IMR-90 (cell line): ENCODE measurements at regions of chr1 and their contacts with region 1.

Region 1: DNA sequence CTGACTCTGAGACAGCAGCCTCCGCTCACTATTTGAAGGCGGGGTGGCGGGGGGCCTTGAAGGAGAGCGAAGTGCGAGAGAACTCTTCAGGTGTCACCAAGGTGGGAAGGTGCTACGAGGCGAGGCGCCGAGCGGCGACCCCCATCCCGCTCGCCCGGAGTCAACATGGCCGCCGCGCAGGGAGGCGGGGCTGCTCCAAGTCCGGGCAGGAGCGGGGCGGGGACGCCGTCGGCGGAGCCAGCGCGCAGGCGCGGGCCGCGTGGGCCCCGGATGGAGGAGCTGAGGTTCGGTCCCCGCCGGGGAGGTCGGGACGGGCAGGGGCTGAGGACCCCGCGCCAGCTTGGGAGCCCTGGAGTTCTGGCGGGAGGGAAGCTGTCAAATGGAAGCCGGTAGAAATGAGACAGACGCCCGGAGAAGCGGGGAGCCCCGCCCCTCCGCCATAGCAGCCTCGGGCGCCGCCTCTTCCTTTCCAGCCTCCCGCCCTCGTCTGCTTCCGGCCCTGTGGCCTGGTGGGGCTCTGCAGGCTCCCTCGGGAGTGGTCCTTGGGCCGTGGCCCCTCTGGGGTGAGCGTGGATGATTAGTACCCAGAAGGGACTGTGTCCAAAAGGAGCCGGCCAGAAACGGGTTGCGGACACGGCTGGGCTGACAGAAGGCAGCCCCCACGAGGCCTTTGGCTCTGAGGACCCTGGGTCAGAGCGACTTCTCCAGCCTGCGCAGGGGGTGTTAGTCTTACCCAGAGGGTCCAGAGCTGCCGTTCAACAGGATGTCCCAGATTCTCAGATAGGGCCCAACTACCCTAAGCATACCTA is at the start of gene PIGV:
- DNase-seq: peak; percentile 75
- ATAC-seq: peak; percentile 77
- H3K4me3 ChIP-seq: peak within 1 kb of the TSS; percentile 72
- H3K27ac ChIP-seq: peak within 1 kb of the TSS; percentile 95
- H3K4me1 ChIP-seq: peaks cover 31% of the 10 kb centered on the region
- H3K27me3 ChIP-seq: no peaks in the 10 kb centered on the region
- CTCF ChIP-seq: no peak
- POLR2A ChIP-seq: peak; percentile 66; the same call in 1 of the 2 replicates
- RAD21 ChIP-seq: 0 out of 2 replicates have a peak, but pooled peaks have one; percentile 4
- total RNA-seq, gene PIGV: 8.6 and 10.6 TPM in 2 replicates

Region 2: DNA sequence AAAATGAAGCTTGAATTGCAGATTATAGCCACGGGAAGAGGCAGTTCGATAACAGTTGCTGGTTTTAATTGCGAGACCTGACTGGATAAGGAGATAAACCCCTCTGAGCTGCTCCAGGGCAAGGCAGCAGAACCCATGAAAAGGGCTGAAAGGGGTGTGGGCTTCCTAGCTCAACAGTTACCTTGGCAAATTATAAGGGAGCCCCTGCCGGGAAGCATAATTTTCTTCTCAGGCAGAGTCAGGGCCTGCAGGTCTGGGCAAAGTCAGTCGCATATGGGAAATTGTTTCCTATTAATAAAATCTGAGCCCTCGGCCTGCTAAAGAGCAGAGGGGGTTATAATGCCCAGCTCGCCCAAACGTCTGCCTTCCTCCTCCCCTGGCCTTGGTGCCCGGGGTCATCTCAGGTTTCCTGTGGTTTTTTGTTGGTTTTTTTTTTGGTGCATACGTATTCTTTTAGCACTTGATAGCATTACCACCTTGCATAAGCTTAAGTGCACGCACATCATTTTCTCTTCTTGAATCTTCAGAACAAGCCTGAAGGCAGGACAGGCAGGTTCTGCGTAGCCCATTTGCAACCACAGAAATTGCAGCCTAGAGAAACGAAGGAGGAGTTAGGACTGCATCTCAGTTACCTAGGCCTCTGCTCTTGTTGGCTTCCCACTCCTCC is 1021.9 kb before region 1 on chr1:
- CTCF ChIA-PET with region 1: no interaction called
- POLR2A ChIA-PET with region 1: no interaction called
- dilution Hi-C with region 1: no loop called
- in situ Hi-C with region 1: no loop called
- intact Hi-C with region 1: no loop called
- DNase-seq: no peak
- ATAC-seq: no peak
- H3K4me3 ChIP-seq: no peak overlapping the region
- H3K27ac ChIP-seq: no peak overlapping the region
- H3K4me1 ChIP-seq: no peaks in the 10 kb centered on the region
- H3K27me3 ChIP-seq: no peaks in the 10 kb centered on the region
- CTCF ChIP-seq: no peak
- POLR2A ChIP-seq: no peak
- RAD21 ChIP-seq: no peak

Region 3: GRCh38 chr1:26500488-26501175 is 287.3 kb before region 1 on chr1:
- CTCF ChIA-PET with region 1: no interaction called
- POLR2A ChIA-PET with region 1: no interaction called
- dilution Hi-C with region 1: no loop called
- in situ Hi-C with region 1: no loop called
- intact Hi-C with region 1: loop called (anchors 1 kb)
- DNase-seq: peak; percentile 55
- ATAC-seq: peak; percentile 89
- H3K4me3 ChIP-seq: peak overlapping the region; percentile 60
- H3K27ac ChIP-seq: peak overlapping the region; percentile 81
- H3K4me1 ChIP-seq: peaks cover 5% of the 10 kb centered on the region
- H3K27me3 ChIP-seq: no peaks in the 10 kb centered on the region
- CTCF ChIP-seq: no peak
- POLR2A ChIP-seq: no peak
- RAD21 ChIP-seq: no peak

Region 4: GRCh38 chr1:26602378-26602959 is 185.4 kb before region 1 on chr1:
- CTCF ChIA-PET with region 1: interaction called, 20 read pairs
- POLR2A ChIA-PET with region 1: no interaction called
- dilution Hi-C with region 1: loop called (anchors 25 kb)
- in situ Hi-C with region 1: no loop called
- intact Hi-C with region 1: loop called (anchors 1 kb)
- DNase-seq: peak; percentile 68
- ATAC-seq: peak; percentile 72
- H3K4me3 ChIP-seq: no peak overlapping the region
- H3K27ac ChIP-seq: no peak overlapping the region
- H3K4me1 ChIP-seq: no peaks in the 10 kb centered on the region
- H3K27me3 ChIP-seq: peaks cover 23% of the 10 kb centered on the region
- CTCF ChIP-seq: peak; percentile 95
- POLR2A ChIP-seq: no peak
- RAD21 ChIP-seq: peak; percentile 97

Region 5: GRCh38 chr1:26695356-26696118 is 92.4 kb before region 1 on chr1 and contains the start of gene ARID1A:
- CTCF ChIA-PET with region 1: interaction called, 6 read pairs
- POLR2A ChIA-PET with region 1: interaction called, 13 read pairs
- dilution Hi-C with region 1: no loop called
- in situ Hi-C with region 1: loop called (anchors 5 kb)
- intact Hi-C with region 1: loop called (anchors 1 kb)
- DNase-seq: peak; percentile 97
- ATAC-seq: peak; percentile 68
- H3K4me3 ChIP-seq: peak within 1 kb of the TSS; percentile 89
- H3K27ac ChIP-seq: peak within 1 kb of the TSS; percentile 95
- H3K4me1 ChIP-seq: peaks cover 15% of the 10 kb centered on the region
- H3K27me3 ChIP-seq: no peaks in the 10 kb centered on the region
- CTCF ChIP-seq: 0 out of 2 replicates have a peak, but pooled peaks have one; percentile 12
- POLR2A ChIP-seq: peak; percentile 74
- RAD21 ChIP-seq: peak; percentile 50
- total RNA-seq, gene ARID1A: 14.0 and 16.7 TPM in 2 replicates

Region 6: DNA sequence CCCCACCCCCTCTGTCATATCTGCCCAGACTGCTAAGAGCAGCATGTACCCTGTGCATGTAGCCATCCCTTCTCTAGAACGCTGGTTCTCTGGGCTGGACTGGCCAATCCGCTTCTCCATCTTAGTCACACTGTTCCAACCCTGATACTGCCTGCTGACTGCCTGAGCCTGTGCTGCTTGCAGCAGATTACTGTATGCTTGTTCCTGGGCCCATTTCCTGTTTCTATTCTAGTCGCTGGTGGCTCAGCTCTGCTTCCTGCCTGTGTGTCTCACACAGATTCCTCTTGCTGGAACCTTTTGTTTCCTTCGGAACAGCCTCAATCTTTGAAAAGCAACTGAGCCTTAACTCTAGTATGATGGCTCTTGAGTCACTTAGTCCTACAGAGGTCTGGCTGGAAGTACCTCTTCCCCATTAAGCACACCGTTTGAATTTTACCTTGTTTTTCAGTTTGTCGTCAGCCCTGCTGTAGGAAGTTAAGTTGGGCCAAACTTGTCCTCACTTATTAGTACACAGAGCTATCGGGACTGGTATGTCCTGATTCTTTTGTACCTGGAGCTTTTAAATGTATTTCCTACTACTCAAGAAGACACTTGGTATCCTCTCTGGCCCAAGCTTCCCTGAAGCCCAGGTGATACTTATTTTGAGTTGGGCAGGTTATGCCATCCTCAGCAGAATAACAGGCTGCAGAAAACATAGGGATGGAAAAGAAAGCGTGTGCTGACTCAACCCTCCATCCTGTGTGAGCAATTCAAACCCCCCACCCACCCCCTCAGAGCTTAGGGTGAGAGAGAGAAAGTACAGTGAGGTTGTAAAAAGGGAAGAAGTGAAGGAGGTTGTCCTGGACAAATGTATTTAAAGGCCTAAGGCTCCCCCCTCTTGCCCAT is 43.6 kb before region 1 on chr1:
- CTCF ChIA-PET with region 1: no interaction called
- POLR2A ChIA-PET with region 1: no interaction called
- dilution Hi-C with region 1: no loop called
- in situ Hi-C with region 1: no loop called
- intact Hi-C with region 1: no loop called
- DNase-seq: peak; percentile 94
- ATAC-seq: peak; percentile 94
- H3K4me3 ChIP-seq: no peak overlapping the region
- H3K27ac ChIP-seq: peak overlapping the region; percentile 30
- H3K4me1 ChIP-seq: peaks cover 12% of the 10 kb centered on the region
- H3K27me3 ChIP-seq: no peaks in the 10 kb centered on the region
- CTCF ChIP-seq: no peak
- POLR2A ChIP-seq: no peak
- RAD21 ChIP-seq: peak; percentile 28; the same call in 1 of the 2 replicates

Region 7: GRCh38 chr1:26771643-26772321 is 16.1 kb before region 1 on chr1:
- CTCF ChIA-PET with region 1: no interaction called
- POLR2A ChIA-PET with region 1: no interaction called
- dilution Hi-C with region 1: no loop called
- in situ Hi-C with region 1: no loop called
- intact Hi-C with region 1: loop called (anchors 1 kb)
- DNase-seq: peak; percentile 99
- ATAC-seq: peak; percentile 83
- H3K4me3 ChIP-seq: no peak overlapping the region
- H3K27ac ChIP-seq: peak overlapping the region; percentile 96
- H3K4me1 ChIP-seq: peaks cover 37% of the 10 kb centered on the region
- H3K27me3 ChIP-seq: no peaks in the 10 kb centered on the region
- CTCF ChIP-seq: no peak
- POLR2A ChIP-seq: peak; percentile 60; the same call in 1 of the 2 replicates
- RAD21 ChIP-seq: peak; percentile 7; the same call in 1 of the 2 replicates